ENCODE measurements at regions of chr19 and their contacts with region 1.

Region 1: GRCh38 chr19:48842789-48843162 is 6.5 kb upstream of the HSD17B14 start:
- H3K4me3 ChIP-seq: no peak overlapping the region
- H3K27ac ChIP-seq: no peak overlapping the region
- H3K4me1 ChIP-seq: no peaks in the 10 kb centered on the region
- CTCF ChIP-seq: peak; percentile 74

Region 2: DNA sequence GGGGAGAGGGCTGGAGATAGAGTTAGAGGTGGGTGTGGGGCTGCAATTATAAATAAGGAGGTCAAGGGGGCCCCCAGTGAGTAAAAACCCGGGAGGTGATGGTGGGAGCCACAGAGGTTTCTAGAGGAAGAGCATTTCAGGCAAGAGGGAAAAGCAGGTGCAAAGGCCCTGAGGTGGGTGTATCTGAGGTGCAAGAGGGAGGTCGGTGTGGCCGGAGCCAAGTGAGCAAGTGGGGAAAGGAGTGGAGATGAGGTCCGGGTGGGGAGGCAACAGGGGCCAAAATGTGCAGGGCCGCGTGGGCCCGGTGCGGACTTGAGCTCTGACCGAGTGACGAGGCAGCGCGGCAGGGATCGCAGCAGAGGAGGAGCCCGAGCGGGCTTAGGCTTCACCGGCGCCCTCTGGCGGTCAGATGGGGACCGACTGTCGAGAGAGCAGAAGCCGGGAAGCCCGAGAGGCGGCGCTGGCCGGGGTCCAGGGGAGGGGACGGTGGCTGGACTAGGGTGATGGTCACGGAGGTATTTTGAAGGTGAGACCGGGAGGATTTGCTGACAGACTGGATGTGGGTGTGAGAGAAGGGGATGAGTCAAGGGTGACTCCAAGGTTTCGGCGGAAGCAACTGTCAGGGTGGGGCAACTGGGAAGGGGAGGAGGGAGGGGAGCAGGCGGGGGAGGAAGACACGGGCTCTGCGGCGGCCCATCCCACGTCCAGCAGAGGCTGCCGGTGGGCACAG is 253.9 kb before region 1 on chr19:
- CTCF ChIA-PET with region 1: interaction called, 10 read pairs
- POLR2A ChIA-PET with region 1: no interaction called
- H3K4me3 ChIP-seq: peak overlapping the region; percentile 47
- H3K27ac ChIP-seq: no peak overlapping the region
- H3K4me1 ChIP-seq: no peaks in the 10 kb centered on the region
- CTCF ChIP-seq: peak; percentile 100

Region 3: DNA sequence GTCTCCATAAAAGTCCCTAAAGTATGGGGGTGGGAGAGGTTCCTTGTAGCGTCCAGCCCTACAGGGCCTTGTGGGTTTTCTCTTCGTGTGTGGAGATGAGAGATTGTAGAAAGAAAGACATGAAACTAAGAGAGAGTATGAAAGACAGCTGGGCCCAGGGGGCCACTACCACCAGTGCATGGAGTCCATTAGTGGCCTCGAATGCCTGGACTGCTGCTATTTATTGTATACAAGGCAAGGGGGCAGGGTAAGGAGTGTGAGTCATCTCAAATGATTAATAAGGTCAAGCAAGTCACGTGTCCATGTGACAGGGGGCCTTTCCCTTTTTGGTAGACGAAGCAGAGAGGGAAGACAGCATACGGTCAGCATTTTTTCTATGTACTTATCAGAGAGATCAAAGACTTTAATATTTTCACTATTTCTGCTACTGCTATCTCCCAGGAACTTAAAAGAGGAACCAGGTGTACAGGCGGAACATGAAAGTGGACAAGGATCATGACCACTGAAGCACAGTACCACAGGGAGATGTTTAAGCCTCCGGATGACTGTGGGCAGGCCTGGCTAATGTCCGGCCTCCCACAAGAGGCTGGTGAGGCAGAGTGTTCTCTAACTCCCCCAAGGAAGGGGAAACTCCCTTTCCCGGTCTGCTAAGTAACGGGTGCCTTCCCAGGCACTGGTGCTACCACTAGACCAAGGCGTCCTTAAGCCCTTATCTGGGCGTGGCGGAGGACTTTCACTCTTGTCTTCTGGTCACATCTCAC is 62.0 kb before region 1 on chr19:
- CTCF ChIA-PET with region 1: interaction called, 20 read pairs
- POLR2A ChIA-PET with region 1: no interaction called
- H3K4me3 ChIP-seq: no peak overlapping the region
- H3K27ac ChIP-seq: no peak overlapping the region
- H3K4me1 ChIP-seq: no peaks in the 10 kb centered on the region
- CTCF ChIP-seq: no peak

Region 4: DNA sequence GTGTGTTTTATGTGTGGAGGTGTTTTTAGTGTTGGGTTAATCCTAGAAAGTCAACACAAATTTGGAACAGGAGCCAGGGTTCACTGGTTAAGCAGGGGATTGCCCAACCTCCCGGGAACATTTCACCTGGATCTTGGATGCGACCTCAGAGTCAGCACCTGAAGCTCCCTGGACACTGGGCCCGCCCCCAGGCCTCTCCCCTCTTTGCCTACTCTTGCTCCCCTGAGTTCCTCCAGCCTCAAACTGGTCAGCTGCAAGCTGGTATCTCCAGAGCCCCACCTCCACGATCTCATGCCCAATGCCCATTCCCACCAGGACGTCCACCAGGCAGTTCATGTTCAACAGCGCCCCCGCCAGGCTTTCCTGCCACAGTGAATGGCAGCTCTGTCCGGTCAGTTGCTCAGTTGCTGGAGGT is 16.2 kb before region 1 on chr19:
- CTCF ChIA-PET with region 1: interaction called, 21 read pairs
- POLR2A ChIA-PET with region 1: interaction called, 5 read pairs
- H3K4me3 ChIP-seq: no peak overlapping the region
- H3K27ac ChIP-seq: no peak overlapping the region
- H3K4me1 ChIP-seq: no peaks in the 10 kb centered on the region
- CTCF ChIP-seq: no peak

Region 5: DNA sequence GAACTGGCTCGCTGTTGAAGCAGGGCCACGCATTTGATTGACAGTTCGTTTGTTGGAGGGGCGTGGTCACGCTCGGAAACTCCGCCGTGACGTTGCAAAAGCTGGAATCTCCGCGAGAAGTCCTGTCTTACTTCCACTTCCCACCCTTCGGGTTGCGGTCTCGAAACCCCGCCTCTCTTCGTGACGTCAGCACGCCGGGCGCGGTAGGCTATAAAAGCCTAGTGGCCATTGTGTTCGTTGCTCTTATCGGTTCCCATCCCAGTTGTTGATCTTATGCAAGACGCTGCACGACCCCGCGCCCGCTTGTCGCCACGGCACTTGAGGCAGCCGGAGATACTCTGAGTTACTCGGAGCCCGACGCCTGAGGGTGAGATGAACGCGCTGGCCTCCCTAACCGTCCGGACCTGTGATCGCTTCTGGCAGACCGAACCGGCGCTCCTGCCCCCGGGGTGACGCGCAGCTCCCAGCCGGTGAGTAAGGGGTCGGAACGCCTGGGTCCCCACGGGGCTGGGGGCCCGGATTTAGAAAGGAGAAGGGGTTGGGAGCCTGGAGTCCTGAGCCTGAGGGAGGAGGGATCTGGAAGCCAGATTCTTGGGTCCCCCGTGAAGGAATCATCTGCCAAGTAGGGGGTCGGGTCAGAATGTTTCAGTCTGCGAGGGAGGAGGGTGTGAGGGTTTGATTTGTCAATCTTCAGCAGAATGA is 29.6 kb after region 1 on chr19 and contains the start of gene PPP1R15A:
- CTCF ChIA-PET with region 1: interaction called, 22 read pairs
- POLR2A ChIA-PET with region 1: interaction called, 26 read pairs
- H3K4me3 ChIP-seq: peak within 1 kb of the TSS; percentile 80
- H3K27ac ChIP-seq: peak within 1 kb of the TSS; percentile 93
- H3K4me1 ChIP-seq: peaks cover 32% of the 10 kb centered on the region
- CTCF ChIP-seq: 0 out of 2 replicates have a peak, but pooled peaks have one; percentile 32

Region 6: DNA sequence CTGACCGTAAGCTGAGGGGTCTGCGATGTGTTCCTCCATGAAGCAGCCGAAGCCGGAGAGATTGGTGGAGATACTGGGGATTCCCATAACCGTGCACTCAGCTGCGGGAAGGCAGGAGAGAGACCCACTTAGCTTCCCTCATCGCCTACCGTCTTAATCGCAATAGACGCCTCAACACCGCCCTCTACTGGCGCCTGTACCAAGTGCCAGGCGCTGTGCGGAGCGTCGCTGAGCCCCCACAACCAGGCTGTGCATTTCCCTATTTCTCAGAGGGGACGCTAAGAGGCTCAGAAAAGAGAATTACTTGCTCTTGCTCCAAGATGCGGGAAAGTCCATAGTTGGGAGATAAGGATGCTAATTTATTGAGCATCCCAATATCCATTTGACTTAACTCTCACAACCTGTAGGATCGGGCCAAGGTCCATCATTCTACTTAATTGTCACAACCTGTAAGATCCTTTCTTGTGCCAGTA is 128.2 kb after region 1 on chr19:
- CTCF ChIA-PET with region 1: interaction called, 34 read pairs
- POLR2A ChIA-PET with region 1: interaction called, 4 read pairs
- H3K4me3 ChIP-seq: no peak overlapping the region
- H3K27ac ChIP-seq: no peak overlapping the region
- H3K4me1 ChIP-seq: 0 out of 2 replicates have a peak, but pooled peaks cover 4% of the 10 kb centered on the region
- CTCF ChIP-seq: peak; percentile 91